ENCODE measurements at regions of chr5 and their contacts with region 1.

Region 1: DNA sequence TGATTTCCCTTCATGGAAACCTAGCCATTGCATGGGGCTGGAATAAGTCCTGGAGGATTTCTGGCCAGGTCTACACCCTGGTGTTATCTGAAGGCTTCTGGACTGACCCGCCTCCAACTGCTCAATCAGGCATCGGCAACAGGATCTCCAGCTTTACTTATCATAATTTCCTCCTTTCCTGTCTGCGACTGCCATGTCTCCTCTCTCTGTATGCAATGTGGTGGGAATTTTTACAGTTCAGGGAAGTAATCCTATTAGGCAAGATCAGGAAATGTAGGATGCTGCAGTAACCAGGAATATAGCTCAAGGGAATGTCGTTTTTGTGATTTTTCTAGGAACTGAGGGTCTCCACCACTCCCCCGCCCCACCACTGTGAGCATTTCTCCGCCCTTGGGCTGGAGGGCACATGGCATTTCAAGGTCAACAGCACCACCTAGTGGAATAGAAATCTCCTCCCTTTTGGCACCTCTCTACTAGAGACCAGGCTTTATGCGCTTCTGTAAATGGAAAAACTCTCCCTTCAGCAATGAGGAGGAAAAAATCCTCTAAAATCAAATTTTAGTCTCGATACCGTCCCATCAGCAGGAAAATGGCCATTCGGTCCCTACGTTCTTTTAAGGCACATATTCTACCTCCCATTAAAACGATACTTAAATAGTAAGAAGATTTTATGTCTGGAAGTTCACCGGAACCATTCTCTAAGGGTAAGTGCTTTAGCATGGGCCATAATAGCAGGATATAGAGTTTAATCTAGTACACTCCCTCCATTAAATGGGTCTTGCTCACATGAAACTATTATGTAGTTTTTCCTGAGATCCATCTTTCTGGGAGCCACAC is 93.0 kb downstream of the YTHDC2 start:
- DNase-seq: peak; percentile 53 to 79 (median 61)
- ATAC-seq: peak; percentile 99
- H3K4me3 ChIP-seq: no peak overlapping the region
- H3K27ac ChIP-seq: no peak overlapping the region
- H3K4me1 ChIP-seq: peaks cover 0 to 5% of the 10 kb centered on the region in 2 experiments; a peak in 3 of 5 replicates
- H3K27me3 ChIP-seq: no peaks in the 10 kb centered on the region
- CTCF ChIP-seq: peak; percentile 76 to 86 (median 86)
- EP300 ChIP-seq: no peak
- POLR2A ChIP-seq: no peak
- RAD21 ChIP-seq: peak; percentile 91 to 95

Region 2: DNA sequence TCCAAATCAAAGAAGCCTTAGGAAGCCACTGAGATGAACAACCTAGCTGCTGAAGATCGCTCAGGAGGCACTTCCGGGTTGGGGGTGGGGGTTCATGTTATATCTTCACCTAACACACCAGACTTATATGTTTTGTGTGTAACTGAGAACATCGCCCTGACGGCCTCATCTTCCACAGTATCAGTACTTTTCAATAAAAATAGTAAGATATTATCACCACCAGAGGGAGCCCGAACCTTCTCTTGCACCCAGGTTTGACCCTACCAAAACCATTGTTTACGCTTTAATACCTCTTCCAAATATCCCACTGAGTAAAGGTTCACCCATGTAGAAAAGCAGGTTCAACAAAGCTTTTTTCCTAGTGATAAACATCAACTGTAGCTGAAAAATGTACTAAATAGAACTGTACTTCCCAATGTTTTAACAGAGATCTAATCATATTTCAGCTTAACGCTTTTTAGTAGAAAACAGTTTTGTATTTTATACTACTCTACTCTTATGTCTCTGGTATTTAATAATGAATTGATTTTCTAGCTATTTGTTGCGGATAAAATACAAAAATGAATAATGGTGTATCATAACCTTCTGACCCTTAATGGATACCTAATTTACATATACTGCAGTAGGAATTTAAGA is 1431.4 kb before region 1 on chr5:
- CTCF ChIA-PET with region 1: no interaction called
- POLR2A ChIA-PET with region 1: no interaction called
- in situ Hi-C with region 1: no loop called
- intact Hi-C with region 1: loop called (anchors 5 kb)
- DNase-seq: peak; percentile 60 to 74 (median 67)
- ATAC-seq: peak; percentile 92
- H3K4me3 ChIP-seq: no peak overlapping the region
- H3K27ac ChIP-seq: no peak overlapping the region
- H3K4me1 ChIP-seq: no peaks in the 10 kb centered on the region
- H3K27me3 ChIP-seq: no peaks in the 10 kb centered on the region
- CTCF ChIP-seq: peak; percentile 55 to 80 (median 66); a peak in 5 of 6 replicates
- EP300 ChIP-seq: no peak
- POLR2A ChIP-seq: no peak
- RAD21 ChIP-seq: peak; percentile 73 to 84

Region 3: GRCh38 chr5:112995764-112996618 is 610.5 kb before region 1 on chr5:
- CTCF ChIA-PET with region 1: interaction called, 5 read pairs
- POLR2A ChIA-PET with region 1: no interaction called
- in situ Hi-C with region 1: no loop called
- intact Hi-C with region 1: loop called (anchors 2 kb)
- DNase-seq: peak; percentile 49 to 81 (median 56)
- ATAC-seq: peak; percentile 91
- H3K4me3 ChIP-seq: no peak overlapping the region
- H3K27ac ChIP-seq: no peak overlapping the region
- H3K4me1 ChIP-seq: no peaks in the 10 kb centered on the region
- H3K27me3 ChIP-seq: no peaks in the 10 kb centered on the region
- CTCF ChIP-seq: peak; percentile 74 to 92 (median 89)
- EP300 ChIP-seq: no peak
- POLR2A ChIP-seq: no peak
- RAD21 ChIP-seq: peak; percentile 85 to 88

Region 4: DNA sequence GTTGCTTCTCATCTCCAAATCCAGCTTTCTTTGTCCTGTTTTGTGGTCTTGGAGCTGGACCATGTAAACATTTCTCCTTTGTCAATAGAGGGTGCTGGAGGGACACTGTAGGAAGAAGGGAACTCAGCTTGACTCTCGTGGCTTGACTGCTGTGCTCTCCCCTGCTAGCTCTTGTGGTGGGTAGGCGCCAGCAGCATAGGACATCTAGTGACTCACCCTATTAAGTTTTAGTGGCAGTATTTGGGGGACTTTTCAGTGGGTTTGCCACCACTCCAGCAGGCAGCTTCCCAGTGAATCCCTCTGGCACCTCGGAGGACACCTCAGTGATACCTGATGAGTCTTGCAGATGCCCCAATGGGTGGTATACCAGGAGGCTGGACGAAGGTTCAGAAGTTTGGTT is 269.5 kb before region 1 on chr5:
- CTCF ChIA-PET with region 1: interaction called, 6 read pairs
- POLR2A ChIA-PET with region 1: no interaction called
- in situ Hi-C with region 1: no loop called
- intact Hi-C with region 1: loop called (anchors 1 kb)
- DNase-seq: peak in 1 of 4 experiments; percentile 28
- ATAC-seq: peak; percentile 88
- H3K4me3 ChIP-seq: no peak overlapping the region
- H3K27ac ChIP-seq: no peak overlapping the region
- H3K4me1 ChIP-seq: no peaks in the 10 kb centered on the region
- H3K27me3 ChIP-seq: peaks cover 0 to 3% of the 10 kb centered on the region in 2 experiments; a peak in 2 of 5 replicates
- CTCF ChIP-seq: peak; percentile 42 to 51 (median 44)
- EP300 ChIP-seq: no peak
- POLR2A ChIP-seq: no peak
- RAD21 ChIP-seq: peak in 1 of 2 experiments; percentile 53; a peak in 3 of 4 replicates

Region 5: GRCh38 chr5:113447498-113448050 is 158.9 kb before region 1 on chr5:
- CTCF ChIA-PET with region 1: no interaction called
- POLR2A ChIA-PET with region 1: no interaction called
- in situ Hi-C with region 1: no loop called
- intact Hi-C with region 1: loop called (anchors 10 kb)
- DNase-seq: peak in 2 of 4 experiments; percentile 21 to 34
- ATAC-seq: peak; percentile 87
- H3K4me3 ChIP-seq: no peak overlapping the region
- H3K27ac ChIP-seq: no peak overlapping the region
- H3K4me1 ChIP-seq: no peaks in the 10 kb centered on the region
- H3K27me3 ChIP-seq: no peaks in the 10 kb centered on the region; a peak in 1 of 5 replicates
- CTCF ChIP-seq: peak; percentile 39 to 51 (median 47)
- EP300 ChIP-seq: no peak
- POLR2A ChIP-seq: no peak
- RAD21 ChIP-seq: peak in 1 of 2 experiments; percentile 41; a peak in 3 of 4 replicates